IMR-90 (cell line): ENCODE measurements at regions of chr13 and their contacts with region 1.

Region 1: GRCh38 chr13:76667551-76667950 is 218.7 kb downstream of the KCTD12 start:
- DNase-seq: peak; percentile 77
- ATAC-seq: peak; percentile 94
- H3K4me3 ChIP-seq: no peak overlapping the region
- H3K27ac ChIP-seq: no peak overlapping the region
- H3K4me1 ChIP-seq: no peaks in the 10 kb centered on the region
- H3K27me3 ChIP-seq: peaks cover 2% of the 10 kb centered on the region; the same call in 1 of the 2 replicates
- CTCF ChIP-seq: peak; percentile 82
- POLR2A ChIP-seq: no peak
- RAD21 ChIP-seq: peak; percentile 86

Region 2: GRCh38 chr13:76980075-76980718 is 312.6 kb after region 1 on chr13:
- CTCF ChIA-PET with region 1: interaction called, 3 read pairs
- POLR2A ChIA-PET with region 1: no interaction called
- dilution Hi-C with region 1: no loop called
- in situ Hi-C with region 1: no loop called
- intact Hi-C with region 1: loop called (anchors 2 kb)
- DNase-seq: peak; percentile 24
- ATAC-seq: peak; percentile 100
- H3K4me3 ChIP-seq: peak overlapping the region; percentile 44
- H3K27ac ChIP-seq: no peak overlapping the region
- H3K4me1 ChIP-seq: no peaks in the 10 kb centered on the region
- H3K27me3 ChIP-seq: peaks cover 24% of the 10 kb centered on the region
- CTCF ChIP-seq: peak; percentile 87
- POLR2A ChIP-seq: no peak
- RAD21 ChIP-seq: peak; percentile 66